Right lobe of liver (tissue), 6 donors: ENCODE measurements at regions of chr7 and their contacts with region 1.

Region 1: DNA sequence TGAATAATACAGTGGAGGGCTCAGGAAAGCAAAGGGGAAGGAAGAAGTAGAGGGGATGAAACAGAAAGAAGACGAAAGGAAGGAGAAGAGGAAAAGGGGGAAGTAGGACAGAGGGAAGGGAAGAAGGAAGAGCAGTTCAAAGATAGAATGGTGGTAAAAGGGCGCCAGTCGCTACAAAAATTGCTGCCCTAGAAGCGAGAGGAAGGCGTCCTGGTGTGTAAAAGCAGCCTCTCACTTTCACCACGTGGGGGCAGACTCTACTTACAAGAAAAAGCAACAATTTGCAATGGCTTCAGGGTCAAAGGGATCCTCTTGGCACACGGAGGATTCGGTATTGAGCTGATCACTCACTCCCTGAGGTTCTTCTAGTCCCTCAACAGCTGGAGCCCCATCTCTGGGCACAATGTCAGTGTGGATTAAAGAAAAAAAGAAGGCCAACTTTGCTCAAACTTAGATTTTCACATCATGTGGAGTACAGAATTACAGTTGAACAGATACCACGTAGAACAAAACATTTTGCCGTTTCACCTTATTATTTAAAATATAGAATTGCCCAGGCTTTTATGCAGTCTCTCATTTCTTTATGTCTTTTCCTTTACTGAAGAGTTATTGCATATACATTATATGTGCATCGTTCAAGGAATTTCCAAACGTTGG is 31.4 kb upstream of the NPVF start:
- DNase-seq: peak in 2 of 3 donors; percentile 39 to 72
- ATAC-seq: peak; percentile 89 to 98 (median 95)
- H3K4me3 ChIP-seq: no peak overlapping the region
- H3K27ac ChIP-seq: no peak overlapping the region
- H3K4me1 ChIP-seq: no peaks in the 10 kb centered on the region
- H3K27me3 ChIP-seq: no peaks in the 10 kb centered on the region
- CTCF ChIP-seq: peak; percentile 78 to 90 (median 86)
- POLR2A ChIP-seq: no peak

Region 2: GRCh38 chr7:25347360-25348066 is 87.8 kb after region 1 on chr7:
- intact Hi-C with region 1: no loop called
- DNase-seq: no peak
- ATAC-seq: no peak
- H3K4me3 ChIP-seq: no peak overlapping the region
- H3K27ac ChIP-seq: no peak overlapping the region
- H3K4me1 ChIP-seq: no peaks in the 10 kb centered on the region
- H3K27me3 ChIP-seq: no peaks in the 10 kb centered on the region
- CTCF ChIP-seq: no peak
- POLR2A ChIP-seq: no peak

Region 3: DNA sequence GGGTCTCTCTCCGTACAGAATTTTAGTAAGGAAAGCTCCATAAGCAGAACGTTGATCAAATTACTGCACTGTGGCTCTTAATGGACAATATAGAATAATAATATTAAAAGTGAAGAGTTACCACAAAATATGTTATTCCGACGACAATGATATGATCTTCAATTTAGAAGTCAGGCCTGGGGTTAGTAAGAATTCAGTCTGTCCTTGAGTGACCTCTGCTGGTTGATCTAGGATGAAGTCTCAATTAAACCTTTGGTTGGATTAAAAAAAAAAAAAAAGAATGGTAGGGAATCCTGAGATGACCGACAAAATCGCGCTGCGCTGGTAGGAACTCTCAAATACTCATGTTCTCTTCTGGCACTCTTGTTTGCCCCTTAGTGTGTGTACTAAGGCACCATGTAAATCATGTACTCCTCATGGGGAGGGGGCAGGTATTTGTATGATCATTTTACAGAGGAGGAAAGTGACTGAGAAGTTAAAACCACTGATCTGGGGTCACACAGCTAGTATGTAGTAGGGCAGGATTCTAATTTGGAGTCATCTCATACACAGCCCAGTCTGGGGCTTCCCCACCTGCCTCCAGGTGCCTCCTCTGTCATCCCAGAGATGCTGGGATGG is 129.9 kb after region 1 on chr7:
- intact Hi-C with region 1: loop called (anchors 5 kb)
- DNase-seq: no peak
- ATAC-seq: peak; percentile 73 to 83 (median 75)
- H3K4me3 ChIP-seq: no peak overlapping the region
- H3K27ac ChIP-seq: no peak overlapping the region
- H3K4me1 ChIP-seq: no peaks in the 10 kb centered on the region
- H3K27me3 ChIP-seq: no peaks in the 10 kb centered on the region
- CTCF ChIP-seq: peak; percentile 52 to 67 (median 58)
- POLR2A ChIP-seq: no peak